Activated T-helper 1 cell treated with anti-CD3 and anti-CD28 coated beads, Interleukin-12 subunit alpha, Interleukin-12 subunit beta, Interleukin-2, Interleukin-4 antibody, amounts not matched to agents 30 ng/mL and 10 ng/mL and 1 ng/mL, durations not matched to agents 14 hours and 24 hours and 36 hours (primary cell): ENCODE measurements at regions of chr16 and their contacts with region 1.

Region 1: GRCh38 chr16:24753437-24753836 is 24.0 kb downstream of the TNRC6A start:
- DNase-seq: no peak
- H3K4me3 Mint-ChIP-seq: no peak overlapping the region
- H3K27ac Mint-ChIP-seq: peak overlapping the region; percentile 6
- H3K4me1 Mint-ChIP-seq: peaks cover 45% of the 10 kb centered on the region
- H3K27me3 Mint-ChIP-seq: no peaks in the 10 kb centered on the region

Region 2: DNA sequence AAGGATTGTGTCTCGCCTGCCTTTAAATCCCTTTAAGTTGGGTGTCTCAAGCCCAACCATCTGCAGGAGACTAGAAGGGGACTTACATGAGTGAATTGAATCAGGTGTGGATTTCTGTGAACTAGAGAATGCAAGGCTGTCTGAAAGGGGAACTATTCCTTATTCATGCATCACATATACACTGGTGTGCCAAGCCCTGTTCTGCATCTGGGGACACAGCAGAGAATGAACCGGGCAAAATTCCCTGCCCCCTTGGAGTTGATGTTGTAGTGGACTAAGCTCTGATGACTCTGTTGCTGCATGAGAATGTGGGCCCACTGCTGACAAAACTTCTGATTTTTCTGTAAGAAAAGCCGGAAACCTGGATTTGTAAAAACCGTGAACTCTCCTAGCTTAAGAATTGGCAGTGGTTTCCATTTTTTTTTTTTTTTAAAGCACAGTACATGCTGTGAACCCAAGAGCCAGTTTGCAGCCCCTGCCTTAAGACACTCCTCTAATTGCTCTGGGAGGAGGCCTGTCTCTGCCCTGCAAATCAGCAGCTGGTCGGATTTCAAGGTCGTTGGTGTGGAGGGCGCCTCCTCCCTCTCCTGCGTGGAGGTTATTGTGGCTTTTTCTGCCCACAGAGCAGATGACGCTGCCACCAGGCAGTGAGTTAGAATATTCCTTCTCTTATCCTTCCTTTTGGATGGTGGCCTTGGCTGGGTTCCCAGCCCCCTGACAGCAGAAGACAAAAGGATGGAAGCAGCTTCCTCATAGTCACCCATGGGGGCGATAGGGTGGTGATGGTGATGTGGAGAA is 786.6 kb before region 1 on chr16:
- intact Hi-C with region 1: no loop called
- DNase-seq: no peak
- H3K4me3 Mint-ChIP-seq: no peak overlapping the region
- H3K27ac Mint-ChIP-seq: peak overlapping the region; percentile 34
- H3K4me1 Mint-ChIP-seq: peaks cover 44% of the 10 kb centered on the region
- H3K27me3 Mint-ChIP-seq: no peaks in the 10 kb centered on the region

Region 3: GRCh38 chr16:24580665-24581064 is 172.8 kb before region 1 on chr16:
- intact Hi-C with region 1: loop called (anchors 10 kb)
- DNase-seq: no peak
- H3K4me3 Mint-ChIP-seq: no peak overlapping the region
- H3K27ac Mint-ChIP-seq: no peak overlapping the region
- H3K4me1 Mint-ChIP-seq: peaks cover 9% of the 10 kb centered on the region
- H3K27me3 Mint-ChIP-seq: peaks cover 13% of the 10 kb centered on the region